MCF 10A (cell line): ENCODE measurements at regions of chr10 and their contacts with region 1.

Region 1: DNA sequence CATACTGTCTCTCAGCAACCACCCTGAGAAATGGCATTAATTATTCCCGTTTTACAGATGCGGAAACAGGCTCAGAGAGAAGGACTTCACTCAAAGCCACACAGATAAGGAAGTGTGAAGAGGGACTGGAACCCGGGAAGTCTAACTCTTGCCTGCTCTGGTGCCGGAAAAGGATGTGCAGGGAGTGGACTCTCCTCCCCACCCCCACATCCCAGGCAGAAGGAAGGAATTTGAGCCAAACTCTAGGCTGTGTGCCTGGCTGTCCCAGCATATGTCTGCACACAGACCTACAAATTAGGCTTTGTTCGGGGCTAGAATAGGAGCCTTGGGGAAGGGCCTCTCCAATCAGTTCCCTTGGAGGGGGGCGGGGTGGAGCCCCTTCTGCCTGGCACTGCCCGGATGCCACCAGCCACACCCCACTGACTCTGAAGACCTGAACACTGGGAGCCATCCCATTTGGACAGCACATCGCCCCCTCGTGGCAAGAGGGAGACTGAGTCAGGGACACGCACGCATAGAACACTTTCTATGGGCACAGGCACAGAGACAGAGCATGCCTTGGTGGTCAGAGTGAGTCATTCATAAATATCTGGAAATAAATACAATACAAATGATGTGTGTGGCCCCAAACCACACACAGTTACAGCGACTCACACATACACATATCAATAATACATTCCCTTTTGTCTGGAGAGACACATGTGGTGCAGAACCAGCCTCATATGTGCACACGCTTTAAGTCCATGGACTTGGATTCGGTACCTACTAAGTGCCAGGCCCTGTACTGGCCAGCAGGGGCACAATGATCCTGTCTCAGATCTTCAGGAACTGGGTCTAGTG is 13.1 kb downstream of the LZTS2 start:
- DNase-seq: peak; percentile 95
- H3K4me3 Mint-ChIP-seq: no peak overlapping the region
- H3K27ac Mint-ChIP-seq: peak overlapping the region; percentile 29
- H3K4me1 Mint-ChIP-seq: peaks cover 26% of the 10 kb centered on the region
- H3K27me3 Mint-ChIP-seq: no peaks in the 10 kb centered on the region
- CTCF ChIP-seq: peak; percentile 67

Region 2: DNA sequence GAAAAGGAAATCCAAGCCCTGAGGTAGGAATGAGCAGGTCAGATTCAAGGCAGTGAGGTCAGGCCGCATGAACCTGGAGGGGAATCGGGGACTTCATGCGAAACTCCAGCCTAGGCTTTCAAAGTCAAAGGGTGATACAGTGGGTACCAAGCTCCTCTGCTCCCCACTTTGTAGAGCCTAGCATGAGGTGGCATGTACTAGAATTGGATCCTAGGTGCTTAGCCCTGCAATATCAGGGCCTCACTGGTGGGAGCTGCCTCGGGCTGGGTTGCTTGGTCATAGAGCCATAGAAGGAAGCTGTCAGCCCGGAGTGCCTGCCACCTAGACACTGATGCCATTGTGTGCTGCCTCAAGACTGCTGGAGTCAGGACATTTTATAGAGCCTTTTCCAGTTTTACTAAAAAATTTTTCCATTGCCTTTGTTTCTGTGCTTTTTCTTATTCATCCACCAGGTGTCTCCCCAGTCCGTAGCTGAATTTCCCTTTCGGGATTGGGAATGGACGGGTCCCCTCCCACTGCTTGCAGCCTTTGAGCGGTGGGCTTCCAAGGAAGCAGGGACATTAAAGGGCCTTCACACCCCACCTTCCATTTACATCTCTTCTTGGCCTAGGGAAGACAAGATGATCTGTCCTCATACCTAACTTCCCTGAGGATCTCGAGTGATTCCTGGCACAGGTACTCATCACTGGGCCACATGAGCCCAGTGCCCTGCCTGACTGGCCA is 18.6 kb before region 1 on chr10:
- CTCF ChIA-PET with region 1: interaction called, 199 read pairs
- POLR2A ChIA-PET with region 1: interaction called, 26 read pairs
- intact Hi-C with region 1: loop called (anchors 1 kb)
- DNase-seq: peak; percentile 60
- H3K4me3 Mint-ChIP-seq: no peak overlapping the region
- H3K27ac Mint-ChIP-seq: peak overlapping the region; percentile 40
- H3K4me1 Mint-ChIP-seq: peaks cover 20% of the 10 kb centered on the region
- H3K27me3 Mint-ChIP-seq: no peaks in the 10 kb centered on the region
- CTCF ChIP-seq: peak; percentile 51

Region 3: DNA sequence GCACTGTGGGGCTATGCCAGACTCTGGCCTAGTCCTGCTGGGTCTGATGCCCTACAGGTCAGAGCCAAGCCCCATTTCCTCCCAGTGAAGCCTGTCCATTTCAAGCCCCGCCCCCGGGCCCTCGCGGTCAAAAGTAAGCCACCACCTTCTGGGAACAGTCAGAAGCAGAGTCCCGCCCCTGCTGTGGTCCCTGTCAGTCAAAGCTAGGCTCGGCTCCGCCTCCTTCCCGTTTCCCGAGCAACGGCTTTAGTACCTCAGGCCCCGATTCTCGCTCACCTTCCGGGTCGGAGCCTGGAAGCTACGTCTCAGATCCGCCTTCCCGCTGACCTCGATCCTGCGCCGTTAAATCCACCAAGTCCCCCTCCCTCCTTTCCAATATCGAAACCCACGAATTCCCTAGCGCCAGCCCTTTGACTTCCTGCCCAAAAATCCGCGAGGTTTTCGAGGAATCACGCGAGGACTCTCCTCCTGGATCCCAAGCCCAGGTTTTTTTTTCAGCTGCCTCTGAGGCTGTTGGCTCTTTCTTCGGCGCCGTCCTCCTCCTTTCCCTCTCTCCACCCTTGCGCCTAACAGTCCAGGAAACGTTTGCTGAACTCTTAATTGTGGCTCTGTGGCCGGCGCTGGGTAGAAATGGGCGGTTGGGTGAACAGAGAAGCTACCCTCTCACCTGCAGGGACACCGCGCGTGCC is 30.1 kb after region 1 on chr10:
- CTCF ChIA-PET with region 1: interaction called, 10 read pairs
- POLR2A ChIA-PET with region 1: interaction called, 5 read pairs
- intact Hi-C with region 1: no loop called
- DNase-seq: peak; percentile 98
- H3K4me3 Mint-ChIP-seq: peak overlapping the region; percentile 98
- H3K27ac Mint-ChIP-seq: peak overlapping the region; percentile 100
- H3K4me1 Mint-ChIP-seq: peaks cover 29% of the 10 kb centered on the region
- H3K27me3 Mint-ChIP-seq: no peaks in the 10 kb centered on the region
- CTCF ChIP-seq: no peak

Region 4: DNA sequence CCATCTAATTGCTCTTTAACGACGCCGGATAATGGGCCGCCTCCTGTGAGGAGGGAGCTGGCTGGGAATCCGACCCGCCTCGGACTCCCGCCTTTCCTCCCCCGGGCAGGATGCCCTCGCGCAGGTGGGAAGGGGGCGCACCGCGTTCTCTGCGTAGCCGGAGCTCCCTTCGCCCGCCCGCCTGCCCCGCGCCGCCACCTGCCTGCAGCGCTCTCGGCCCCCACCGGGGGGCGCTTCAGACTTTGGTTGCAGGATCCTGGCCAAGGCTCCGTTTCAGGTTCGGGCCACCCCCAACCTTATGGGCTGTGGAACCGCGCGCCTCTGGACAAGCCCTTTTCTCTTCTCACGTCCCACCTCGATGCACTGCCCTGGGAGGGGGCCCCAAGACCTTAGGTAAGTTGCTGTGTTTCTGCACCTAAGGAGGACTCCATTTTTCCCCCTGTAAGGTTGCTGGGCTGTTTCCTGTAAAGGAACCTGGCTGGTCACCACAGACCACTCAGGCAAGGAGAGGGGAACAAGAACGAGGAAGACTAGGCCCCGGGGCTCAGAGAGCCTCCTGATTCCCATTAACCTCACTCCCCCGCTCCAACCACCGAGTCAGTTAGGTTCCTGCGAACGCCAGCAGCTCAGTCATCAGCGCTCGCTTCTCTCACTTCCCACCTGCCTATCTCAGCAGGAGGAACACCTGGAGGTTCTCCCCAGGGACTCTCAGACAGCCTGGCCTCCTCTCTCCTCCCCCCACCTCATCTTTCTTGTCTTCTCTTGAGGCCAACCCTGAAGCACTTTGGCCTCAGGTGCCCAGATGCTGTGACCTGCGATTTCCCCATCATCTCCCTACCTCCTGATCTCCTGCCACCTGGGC is 37.7 kb after region 1 on chr10:
- CTCF ChIA-PET with region 1: interaction called, 13 read pairs
- POLR2A ChIA-PET with region 1: no interaction called
- intact Hi-C with region 1: no loop called
- DNase-seq: peak; percentile 64
- H3K4me3 Mint-ChIP-seq: peak overlapping the region; percentile 47
- H3K27ac Mint-ChIP-seq: no peak overlapping the region
- H3K4me1 Mint-ChIP-seq: peaks cover 8% of the 10 kb centered on the region
- H3K27me3 Mint-ChIP-seq: no peaks in the 10 kb centered on the region
- CTCF ChIP-seq: peak; percentile 85